ENCODE measurements at regions of chr5 and their contacts with region 1.

Region 1: DNA sequence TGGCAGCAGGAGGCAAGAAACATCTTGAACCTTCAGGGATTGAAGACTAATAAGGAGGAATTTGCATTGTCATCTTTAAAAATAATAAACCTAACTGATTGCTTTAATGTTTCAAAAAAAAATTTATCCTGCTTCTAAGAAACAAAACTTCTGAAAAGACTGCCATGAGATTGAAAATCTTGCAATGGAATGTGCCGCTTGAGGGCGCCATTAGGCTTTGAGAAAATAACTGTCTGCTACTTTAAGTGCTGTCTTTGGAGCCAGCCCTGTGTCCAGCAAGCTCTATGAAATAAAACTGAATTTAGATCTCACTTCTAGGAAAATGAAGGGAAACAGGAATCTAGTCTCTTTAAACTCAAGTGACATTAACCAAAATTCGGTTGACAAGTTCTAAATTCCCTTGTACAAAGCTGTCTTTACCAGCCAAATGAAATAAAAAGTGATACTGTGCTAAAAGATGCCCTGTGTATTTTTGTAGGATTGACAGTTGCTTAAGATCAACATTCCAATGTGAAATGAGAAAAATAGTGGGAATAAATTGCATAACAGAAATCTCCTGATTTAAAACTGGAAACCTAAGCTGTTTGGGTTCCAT is 79.4 kb downstream of the ESM1 start:
- DNase-seq: peak; percentile 85
- ATAC-seq: no peak
- H3K4me3 Mint-ChIP-seq: no peak overlapping the region
- H3K27ac Mint-ChIP-seq: no peak overlapping the region
- H3K4me1 Mint-ChIP-seq: peaks cover 66% of the 10 kb centered on the region
- H3K27me3 Mint-ChIP-seq: peaks cover 26% of the 10 kb centered on the region

Region 2: GRCh38 chr5:54738118-54738972 is 167.7 kb before region 1 on chr5:
- CTCF ChIA-PET with region 1: no interaction called
- DNase-seq: no peak
- ATAC-seq: peak; percentile 39
- H3K4me3 Mint-ChIP-seq: no peak overlapping the region
- H3K27ac Mint-ChIP-seq: no peak overlapping the region
- H3K4me1 Mint-ChIP-seq: peaks cover 20% of the 10 kb centered on the region
- H3K27me3 Mint-ChIP-seq: no peaks in the 10 kb centered on the region

Region 3: GRCh38 chr5:54895816-54896341 is 10.2 kb before region 1 on chr5:
- CTCF ChIA-PET with region 1: interaction called, 21 read pairs
- DNase-seq: no peak
- ATAC-seq: peak; percentile 42
- H3K4me3 Mint-ChIP-seq: peak overlapping the region; percentile 58
- H3K27ac Mint-ChIP-seq: peak overlapping the region; percentile 23
- H3K4me1 Mint-ChIP-seq: peaks cover 5% of the 10 kb centered on the region
- H3K27me3 Mint-ChIP-seq: peaks cover 63% of the 10 kb centered on the region

Region 4: GRCh38 chr5:54969856-54970828 is 64.1 kb after region 1 on chr5:
- CTCF ChIA-PET with region 1: interaction called, 10 read pairs
- DNase-seq: no peak
- ATAC-seq: no peak
- H3K4me3 Mint-ChIP-seq: no peak overlapping the region
- H3K27ac Mint-ChIP-seq: no peak overlapping the region
- H3K4me1 Mint-ChIP-seq: no peaks in the 10 kb centered on the region
- H3K27me3 Mint-ChIP-seq: peaks cover 3% of the 10 kb centered on the region

Region 5: DNA sequence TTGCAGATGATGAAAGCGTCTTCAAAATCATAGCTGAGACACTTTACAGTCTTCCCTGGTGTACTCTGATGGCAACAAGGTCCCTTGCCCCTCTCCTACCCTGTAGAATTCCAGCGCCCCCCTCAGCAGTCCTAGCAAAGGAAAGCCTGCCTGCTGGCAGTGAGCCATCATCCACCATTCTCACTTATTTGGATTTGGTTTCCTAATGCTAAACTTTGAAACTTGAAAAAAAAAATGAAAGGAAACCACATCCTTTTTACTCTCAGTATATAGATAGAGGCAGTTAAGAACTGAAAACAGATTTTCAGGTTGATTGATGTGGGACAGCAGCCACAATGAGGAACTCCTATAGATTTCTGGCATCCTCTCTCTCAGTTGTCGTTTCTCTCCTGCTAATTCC is 196.3 kb after region 1 on chr5 and contains the start of gene GZMA:
- CTCF ChIA-PET with region 1: interaction called, 15 read pairs
- DNase-seq: peak; percentile 68
- ATAC-seq: peak; percentile 62
- H3K4me3 Mint-ChIP-seq: peak within 1 kb of the TSS; percentile 91
- H3K27ac Mint-ChIP-seq: peak within 1 kb of the TSS; percentile 97
- H3K4me1 Mint-ChIP-seq: peaks cover 73% of the 10 kb centered on the region
- H3K27me3 Mint-ChIP-seq: no peaks in the 10 kb centered on the region
- total RNA-seq, gene GZMA: 927 to 1,065 TPM

Region 6: DNA sequence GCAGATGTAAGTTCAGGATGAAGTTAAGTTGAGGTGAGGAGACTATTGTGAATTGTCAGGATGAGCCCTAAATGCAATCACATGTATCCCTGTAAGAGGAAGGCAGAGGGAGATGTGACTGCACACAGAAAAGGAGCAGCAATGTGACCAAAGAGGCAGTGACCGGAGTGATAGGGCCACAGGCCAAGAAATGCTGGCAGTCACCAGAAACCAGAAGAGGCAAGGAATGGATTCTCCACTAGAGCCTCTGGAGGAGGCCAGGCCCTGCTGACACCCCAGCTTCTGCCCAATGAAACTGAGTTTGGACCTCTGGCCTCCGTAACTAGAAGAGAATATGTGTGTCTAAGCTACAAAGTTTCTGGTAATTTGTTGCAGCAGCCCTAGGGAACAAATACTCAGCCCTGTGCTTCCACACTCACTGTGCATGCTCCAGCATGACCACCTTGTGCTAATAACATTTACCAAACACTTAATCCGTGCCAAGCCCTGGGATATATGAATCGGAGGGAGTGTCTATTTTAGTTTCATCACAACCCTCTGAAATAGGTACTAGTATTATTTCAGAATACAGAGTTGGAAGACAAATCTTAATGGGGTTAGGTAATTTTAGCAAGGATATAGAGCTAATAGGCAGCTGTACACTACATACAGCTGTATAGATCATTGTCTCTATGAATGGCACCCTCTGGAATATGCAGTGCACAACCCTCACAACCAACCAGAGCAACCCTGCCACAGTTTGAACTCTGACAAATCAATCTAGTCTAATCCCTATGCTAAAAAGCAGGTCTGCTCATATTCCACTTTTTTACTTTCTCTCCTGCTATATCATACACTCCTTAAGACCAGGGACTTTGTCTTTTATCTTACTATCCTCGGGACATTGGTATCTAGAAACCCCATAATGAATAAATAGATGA is 246.1 kb after region 1 on chr5:
- CTCF ChIA-PET with region 1: interaction called, 12 read pairs
- DNase-seq: no peak
- ATAC-seq: no peak
- H3K4me3 Mint-ChIP-seq: no peak overlapping the region
- H3K27ac Mint-ChIP-seq: no peak overlapping the region
- H3K4me1 Mint-ChIP-seq: no peaks in the 10 kb centered on the region
- H3K27me3 Mint-ChIP-seq: peaks cover 41% of the 10 kb centered on the region

Region 7: DNA sequence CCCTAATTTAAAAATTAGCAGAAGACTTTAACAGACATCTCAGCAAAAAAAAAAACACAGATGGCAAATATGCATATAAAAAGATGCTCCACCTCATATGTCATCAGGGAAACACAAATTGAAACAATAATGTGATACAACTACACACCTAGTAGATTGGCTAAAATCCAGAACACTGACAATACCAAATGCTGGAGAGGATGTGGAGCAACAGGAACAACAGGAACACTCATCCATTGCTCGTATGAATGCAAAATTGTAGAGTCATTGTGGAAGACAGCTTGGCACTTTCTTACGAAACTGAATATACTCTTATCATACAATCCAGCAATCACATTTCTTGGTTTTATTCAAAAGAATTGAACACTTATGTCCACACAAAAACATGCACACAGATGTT is 299.0 kb after region 1 on chr5:
- CTCF ChIA-PET with region 1: no interaction called
- DNase-seq: no peak
- ATAC-seq: no peak
- H3K4me3 Mint-ChIP-seq: no peak overlapping the region
- H3K27ac Mint-ChIP-seq: no peak overlapping the region
- H3K4me1 Mint-ChIP-seq: peaks cover 3% of the 10 kb centered on the region
- H3K27me3 Mint-ChIP-seq: peaks cover 59% of the 10 kb centered on the region